ENCODE measurements at regions of chr2 and their contacts with region 1.

Region 1: GRCh38 chr2:169221745-169222369 is 140.5 kb downstream of the LRP2 start:
- DNase-seq: no peak
- ATAC-seq: peak in 1 of 2 donors; percentile 38

Region 2: GRCh38 chr2:168961450-168962229 is 260.2 kb before region 1 on chr2:
- intact Hi-C with region 1: loop called in 1 of 2 experiments (anchors 5 kb)
- DNase-seq: no peak
- ATAC-seq: peak; percentile 83 to 91

Region 3: DNA sequence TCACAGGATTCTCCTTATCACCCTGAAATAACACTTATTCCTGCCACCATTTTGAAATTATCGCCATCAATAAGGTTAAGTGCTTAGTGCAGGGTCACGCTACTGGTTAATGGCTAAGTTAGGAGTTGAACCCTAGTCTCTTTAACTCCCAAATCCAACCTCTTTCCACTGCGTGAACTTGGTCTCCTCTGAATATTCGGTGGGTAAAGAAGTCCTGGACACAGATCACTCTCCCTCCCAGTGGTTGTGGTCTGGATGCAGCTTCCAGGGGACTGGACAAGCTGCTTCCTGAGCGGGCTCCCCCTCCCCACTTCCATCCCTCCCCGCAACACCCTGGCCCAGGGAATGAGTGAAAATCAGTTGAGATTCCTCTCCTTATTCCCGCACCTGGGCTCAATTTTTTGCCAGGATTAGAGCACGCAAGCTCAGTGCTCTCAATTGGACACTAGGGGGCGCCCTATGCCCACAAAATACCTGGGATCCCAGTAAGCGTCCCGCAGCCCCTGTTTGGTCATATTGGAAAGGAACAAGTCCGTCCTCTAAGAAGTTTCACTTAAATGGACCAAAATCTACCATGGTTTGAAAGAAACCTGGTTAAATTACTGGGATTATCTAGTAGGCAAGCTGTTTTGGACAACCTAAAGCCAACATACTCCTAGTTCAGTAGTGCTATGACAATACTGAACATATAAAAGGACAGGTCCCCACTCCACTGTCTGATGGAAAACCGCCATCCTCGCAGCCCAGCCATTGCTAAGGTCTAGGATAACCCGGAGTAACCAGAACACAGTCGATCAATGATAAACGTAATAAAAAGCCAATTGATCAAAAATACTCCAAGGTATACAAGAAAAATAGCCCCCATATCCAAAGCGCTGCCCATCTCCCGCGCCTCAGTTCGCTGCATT is 112.1 kb before region 1 on chr2:
- intact Hi-C with region 1: loop called in 1 of 2 experiments (anchors 5 kb)
- DNase-seq: peak; percentile 79
- ATAC-seq: peak; percentile 76 to 84

Region 4: GRCh38 chr2:169828141-169828811 is 606.4 kb after region 1 on chr2:
- intact Hi-C with region 1: no loop called
- DNase-seq: no peak
- ATAC-seq: peak; percentile 47 to 53

Measured in left cardiac atrium (tissue), 4 donors.